Left cardiac atrium (tissue), 4 donors: ENCODE measurements at regions of chr15 and their contacts with region 1.

Region 1: DNA sequence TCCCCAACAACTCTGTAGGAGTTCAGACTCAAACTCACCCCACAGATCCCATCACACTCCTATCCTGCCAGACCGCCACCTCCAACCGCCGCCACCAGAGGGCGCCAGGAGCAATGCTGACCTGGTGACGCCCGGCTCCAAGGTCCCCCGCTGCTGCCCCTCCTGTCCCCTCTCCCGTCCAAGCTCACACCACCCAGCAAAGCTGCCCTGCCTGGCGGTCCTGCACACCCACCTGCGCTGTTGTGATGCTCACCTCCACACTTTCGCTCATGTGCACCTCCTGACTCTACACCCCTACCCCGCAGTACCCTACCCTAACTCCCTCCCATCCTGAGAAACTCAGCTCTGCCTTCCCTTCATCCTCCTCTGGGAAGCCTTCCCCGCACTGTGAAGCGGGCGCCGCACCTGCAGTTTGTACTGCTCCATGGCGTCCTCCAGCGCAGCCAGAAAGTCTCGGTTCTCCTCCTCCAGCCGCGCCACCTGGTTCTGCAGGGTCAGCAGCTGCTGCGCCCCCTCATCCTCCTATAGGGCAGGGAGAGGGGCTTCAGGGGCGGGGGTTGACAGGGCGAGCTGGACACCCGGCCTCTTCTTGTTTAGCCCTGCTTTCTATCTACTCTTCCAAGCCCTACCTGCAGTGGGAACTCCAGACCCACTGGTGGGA is 7.9 kb downstream of the KIF7 start:
- DNase-seq: peak; percentile 80
- ATAC-seq: peak; percentile 68 to 80

Region 2: GRCh38 chr15:89383365-89384175 is 263.8 kb before region 1 on chr15:
- intact Hi-C with region 1: no loop called
- DNase-seq: peak; percentile 55
- ATAC-seq: peak in 1 of 2 donors; percentile 20

Region 3: DNA sequence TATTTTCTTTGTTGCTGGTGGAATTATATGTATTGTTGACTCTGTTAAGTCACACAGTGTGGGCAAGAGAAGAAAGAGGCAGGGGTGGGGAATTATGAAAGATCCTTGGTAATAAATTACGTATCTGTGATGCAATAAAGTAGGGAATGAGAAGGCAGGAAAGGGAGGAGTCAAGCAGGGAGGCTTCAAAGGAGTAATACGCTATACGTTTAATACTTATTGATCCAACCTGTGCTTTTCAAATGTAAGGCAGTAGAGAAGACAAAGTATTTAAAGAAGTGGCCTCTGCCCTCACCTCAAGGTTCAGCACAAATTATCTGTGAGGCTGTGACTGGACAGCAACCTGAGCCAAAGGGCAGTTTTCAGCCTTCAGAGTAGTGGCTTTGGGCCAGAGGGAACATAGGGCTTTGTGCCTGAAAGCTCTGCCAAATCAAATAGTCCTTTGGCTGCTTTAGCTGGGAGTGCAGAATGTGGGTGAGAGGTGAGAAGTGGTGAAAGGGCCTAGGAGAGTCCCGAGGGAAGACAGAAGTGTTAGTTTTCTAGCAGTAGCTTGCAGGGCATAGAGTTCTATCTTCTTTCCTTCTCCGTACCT is 33.1 kb after region 1 on chr15:
- intact Hi-C with region 1: loop called in 1 of 2 experiments (anchors 2 kb)
- DNase-seq: peak; percentile 74
- ATAC-seq: peak; percentile 94 to 98

Region 4: GRCh38 chr15:89690276-89691218 is 43.2 kb after region 1 on chr15 and contains the starts of genes PEX11A and WDR93:
- intact Hi-C with region 1: no loop called
- DNase-seq: peak; percentile 86
- ATAC-seq: peak; percentile 94 to 98
- total RNA-seq, gene PEX11A: 11.1 to 18.3 TPM
- total RNA-seq, gene WDR93: not detected

Region 5: GRCh38 chr15:89732451-89733172 is 85.3 kb after region 1 on chr15:
- intact Hi-C with region 1: loop called (anchors 10 kb)
- DNase-seq: no peak
- ATAC-seq: no peak

Region 6: GRCh38 chr15:89750560-89751542 is 103.5 kb after region 1 on chr15 and contains the start of gene MESP1:
- intact Hi-C with region 1: loop called in 1 of 2 experiments (anchors 5 kb)
- DNase-seq: peak; percentile 94
- ATAC-seq: peak; percentile 95 to 96
- total RNA-seq, gene MESP1: 4.7 to 10.5 TPM